PC-3 (cell line): ENCODE measurements at regions of chr1 and their contacts with region 1.

Region 1: DNA sequence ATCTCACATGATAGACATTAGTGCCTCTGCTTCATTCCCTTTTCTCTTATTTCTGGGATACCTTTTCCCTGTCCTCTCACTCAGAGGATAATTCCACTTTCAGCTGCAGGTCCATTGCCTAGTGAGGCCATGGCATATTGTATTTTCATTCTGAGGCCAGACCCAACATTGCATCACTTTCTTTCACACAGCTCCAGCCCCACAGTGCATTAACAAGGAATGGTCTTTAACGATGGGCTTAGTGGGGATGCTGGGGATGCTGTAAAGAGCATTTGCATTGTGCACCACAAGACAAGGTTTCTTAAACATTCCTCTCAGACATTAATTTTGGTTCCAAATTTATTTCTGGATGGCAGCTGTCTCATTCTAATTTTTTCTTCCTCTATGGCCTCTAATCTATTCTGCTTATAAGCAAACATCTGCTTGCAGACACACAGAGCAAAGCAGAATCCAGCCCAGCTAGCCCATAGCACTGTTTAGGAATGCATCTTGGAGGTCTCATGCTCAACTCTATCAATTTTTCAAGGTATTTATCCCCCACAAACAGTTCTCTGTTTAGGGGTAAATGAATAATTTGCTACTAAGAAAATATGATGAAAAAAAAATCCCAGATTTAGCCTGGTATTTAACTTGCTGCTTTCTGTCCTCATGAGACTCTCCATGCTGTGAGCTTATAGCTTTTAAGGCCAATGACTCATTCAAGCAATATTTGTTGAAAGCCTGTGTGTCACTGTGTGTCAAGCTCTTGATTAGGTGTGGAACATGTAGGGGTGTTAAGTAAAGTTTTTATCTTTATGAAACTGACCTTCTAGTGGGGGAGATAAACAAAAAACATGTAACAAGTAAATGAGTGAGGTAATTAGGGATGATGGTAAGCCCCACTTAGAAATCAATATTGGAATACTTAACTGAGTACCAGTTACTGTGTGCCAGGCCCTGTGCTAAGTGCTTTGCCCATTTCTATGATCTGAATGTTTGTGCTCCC is 44.5 kb upstream of the CCDC190 start:
- DNase-seq: peak; percentile 92
- ATAC-seq: peak; percentile 82
- H3K4me3 ChIP-seq: peak overlapping the region; percentile 3; the same call in 1 of the 2 replicates
- H3K27ac ChIP-seq: peak overlapping the region; percentile 94
- H3K4me1 ChIP-seq: peaks cover 55% of the 10 kb centered on the region
- H3K27me3 ChIP-seq: no peaks in the 10 kb centered on the region
- CTCF ChIP-seq: no peak

Region 2: DNA sequence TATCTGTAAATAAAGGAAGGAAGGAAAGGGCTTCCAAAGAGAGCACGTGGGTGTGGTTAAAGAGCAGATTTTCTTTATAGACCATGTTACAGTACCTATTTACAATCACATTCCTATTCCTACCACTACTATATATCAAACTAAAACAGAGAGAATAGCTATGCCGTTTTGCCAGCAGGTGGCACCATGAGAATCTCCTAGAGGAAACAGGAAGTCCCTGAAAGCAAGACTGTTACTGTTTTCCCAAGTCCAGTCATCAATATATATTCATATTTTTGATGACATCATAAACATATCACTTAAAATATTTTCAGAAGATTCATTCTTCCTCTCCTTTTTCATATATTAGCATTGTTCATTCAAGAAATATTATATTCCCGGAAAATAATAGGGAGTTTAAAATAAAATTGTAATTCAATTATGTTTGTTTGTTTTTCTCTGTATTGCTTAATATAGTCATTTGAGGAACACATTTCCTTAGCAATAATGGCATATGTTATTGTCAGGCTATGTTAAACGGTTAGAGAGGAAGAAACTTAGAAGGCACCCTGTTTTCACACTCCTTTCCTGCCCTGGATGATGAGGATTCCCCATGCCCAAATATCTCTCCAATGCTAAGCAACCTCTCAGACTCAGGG is 51.1 kb before region 1 on chr1:
- CTCF ChIA-PET with region 1: no interaction called
- POLR2A ChIA-PET with region 1: no interaction called
- intact Hi-C with region 1: loop called (anchors 1 kb)
- DNase-seq: peak; percentile 93
- ATAC-seq: peak; percentile 52
- H3K4me3 ChIP-seq: no peak overlapping the region
- H3K27ac ChIP-seq: peak overlapping the region; percentile 81
- H3K4me1 ChIP-seq: peaks cover 49% of the 10 kb centered on the region
- H3K27me3 ChIP-seq: no peaks in the 10 kb centered on the region
- CTCF ChIP-seq: peak; percentile 97

Region 3: GRCh38 chr1:162987866-162988265 is 82.4 kb after region 1 on chr1:
- CTCF ChIA-PET with region 1: no interaction called
- POLR2A ChIA-PET with region 1: interaction called, 8 read pairs
- intact Hi-C with region 1: loop called (anchors 2 kb)
- DNase-seq: peak; percentile 97
- ATAC-seq: peak; percentile 96
- H3K4me3 ChIP-seq: no peak overlapping the region
- H3K27ac ChIP-seq: peak overlapping the region; percentile 75
- H3K4me1 ChIP-seq: peaks cover 30% of the 10 kb centered on the region
- H3K27me3 ChIP-seq: no peaks in the 10 kb centered on the region
- CTCF ChIP-seq: no peak

Region 4: GRCh38 chr1:163035446-163036249 is 130.2 kb after region 1 on chr1:
- CTCF ChIA-PET with region 1: no interaction called
- POLR2A ChIA-PET with region 1: interaction called, 3 read pairs
- intact Hi-C with region 1: loop called (anchors 2 kb)
- DNase-seq: peak; percentile 98
- ATAC-seq: peak; percentile 86
- H3K4me3 ChIP-seq: peak overlapping the region; percentile 1; the same call in 1 of the 2 replicates
- H3K27ac ChIP-seq: peak overlapping the region; percentile 86
- H3K4me1 ChIP-seq: peaks cover 38% of the 10 kb centered on the region
- H3K27me3 ChIP-seq: no peaks in the 10 kb centered on the region
- CTCF ChIP-seq: no peak

Region 5: GRCh38 chr1:163195728-163196448 is 290.4 kb after region 1 on chr1:
- CTCF ChIA-PET with region 1: no interaction called
- POLR2A ChIA-PET with region 1: no interaction called
- intact Hi-C with region 1: no loop called
- DNase-seq: no peak
- ATAC-seq: no peak
- H3K4me3 ChIP-seq: no peak overlapping the region
- H3K27ac ChIP-seq: no peak overlapping the region
- H3K4me1 ChIP-seq: no peaks in the 10 kb centered on the region
- H3K27me3 ChIP-seq: no peaks in the 10 kb centered on the region
- CTCF ChIP-seq: no peak